H1 (cell line): ENCODE measurements at regions of chr1 and their contacts with region 1.

Region 1: GRCh38 chr1:226308723-226309315 is at the start of gene LIN9:
- DNase-seq: peak; percentile 77 to 98
- H3K4me3 ChIP-seq: peak within 1 kb of the TSS; percentile 96 to 100 (median 96)
- H3K27ac ChIP-seq: peak within 1 kb of the TSS; percentile 99
- H3K4me1 ChIP-seq: peaks cover 0 to 12% (median 11%) of the 10 kb centered on the region in 4 experiments; a peak in 6 of 7 replicates
- H3K27me3 ChIP-seq: peaks cover 0 to 12% (median 9%) of the 10 kb centered on the region in 4 experiments; a peak in 5 of 7 replicates
- CTCF ChIP-seq: no peak
- EP300 ChIP-seq: peak in 1 of 2 experiments; percentile 3; a peak in 1 of 3 replicates
- POLR2A ChIP-seq: peak; percentile 88
- RAD21 ChIP-seq: no peak
- total RNA-seq, gene LIN9: 12.4 and 12.6 TPM in 2 replicates

Region 2: GRCh38 chr1:226233293-226233692 is 75.5 kb before region 1 on chr1:
- CTCF ChIA-PET with region 1: no interaction called
- POLR2A ChIA-PET with region 1: no interaction called
- DNase-seq: no peak
- H3K4me3 ChIP-seq: no peak overlapping the region
- H3K27ac ChIP-seq: no peak overlapping the region
- H3K4me1 ChIP-seq: no peaks in the 10 kb centered on the region
- H3K27me3 ChIP-seq: no peaks in the 10 kb centered on the region
- CTCF ChIP-seq: no peak
- EP300 ChIP-seq: no peak
- POLR2A ChIP-seq: no peak
- RAD21 ChIP-seq: no peak

Region 3: GRCh38 chr1:226325178-226325577 is 16.4 kb after region 1 on chr1:
- CTCF ChIA-PET with region 1: interaction called, 9 read pairs
- POLR2A ChIA-PET with region 1: interaction called, 11 read pairs
- DNase-seq: no peak
- H3K4me3 ChIP-seq: no peak overlapping the region
- H3K27ac ChIP-seq: no peak overlapping the region
- H3K4me1 ChIP-seq: no peaks in the 10 kb centered on the region
- H3K27me3 ChIP-seq: no peaks in the 10 kb centered on the region; a peak in 1 of 7 replicates
- CTCF ChIP-seq: no peak
- EP300 ChIP-seq: no peak
- POLR2A ChIP-seq: no peak
- RAD21 ChIP-seq: no peak

Region 4: DNA sequence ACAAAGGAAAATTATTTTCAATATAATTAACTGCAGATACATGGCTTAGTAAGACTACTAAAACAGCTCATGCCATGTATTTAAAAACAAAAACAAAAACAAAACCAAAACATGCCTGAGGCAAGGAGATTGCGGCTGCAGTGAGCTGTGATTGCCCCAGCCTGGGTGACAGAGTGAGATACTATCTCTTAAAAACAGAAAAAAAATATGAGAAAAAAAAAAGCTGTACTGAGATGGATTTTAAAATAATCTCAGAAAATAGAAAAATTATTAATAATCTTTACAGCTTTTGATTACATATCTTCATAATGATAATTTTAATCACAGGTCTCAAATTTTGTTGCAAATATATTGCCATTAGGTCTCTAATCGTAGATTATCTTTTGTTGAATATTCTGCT is 24.1 kb after region 1 on chr1:
- CTCF ChIA-PET with region 1: interaction called, 20 read pairs
- POLR2A ChIA-PET with region 1: interaction called, 11 read pairs
- DNase-seq: no peak
- H3K4me3 ChIP-seq: peak overlapping the region in 1 of 4 experiments; percentile 34; a peak in 1 of 8 replicates
- H3K27ac ChIP-seq: no peak overlapping the region
- H3K4me1 ChIP-seq: peaks cover 0 to 3% (median 0%) of the 10 kb centered on the region in 4 experiments; a peak in 1 of 7 replicates
- H3K27me3 ChIP-seq: no peaks in the 10 kb centered on the region
- CTCF ChIP-seq: no peak
- EP300 ChIP-seq: no peak
- POLR2A ChIP-seq: no peak
- RAD21 ChIP-seq: no peak

Region 5: GRCh38 chr1:226351709-226352108 is 42.9 kb after region 1 on chr1:
- CTCF ChIA-PET with region 1: interaction called, 3 read pairs
- POLR2A ChIA-PET with region 1: interaction called, 11 read pairs
- DNase-seq: no peak
- H3K4me3 ChIP-seq: no peak overlapping the region
- H3K27ac ChIP-seq: no peak overlapping the region
- H3K4me1 ChIP-seq: no peaks in the 10 kb centered on the region
- H3K27me3 ChIP-seq: no peaks in the 10 kb centered on the region
- CTCF ChIP-seq: no peak
- EP300 ChIP-seq: no peak
- POLR2A ChIP-seq: no peak
- RAD21 ChIP-seq: no peak

Region 6: GRCh38 chr1:226390326-226391080 is 81.7 kb after region 1 on chr1:
- CTCF ChIA-PET with region 1: no interaction called
- POLR2A ChIA-PET with region 1: no interaction called
- DNase-seq: no peak
- H3K4me3 ChIP-seq: no peak overlapping the region
- H3K27ac ChIP-seq: no peak overlapping the region
- H3K4me1 ChIP-seq: no peaks in the 10 kb centered on the region
- H3K27me3 ChIP-seq: no peaks in the 10 kb centered on the region
- CTCF ChIP-seq: no peak
- EP300 ChIP-seq: no peak
- POLR2A ChIP-seq: no peak
- RAD21 ChIP-seq: no peak

Region 7: DNA sequence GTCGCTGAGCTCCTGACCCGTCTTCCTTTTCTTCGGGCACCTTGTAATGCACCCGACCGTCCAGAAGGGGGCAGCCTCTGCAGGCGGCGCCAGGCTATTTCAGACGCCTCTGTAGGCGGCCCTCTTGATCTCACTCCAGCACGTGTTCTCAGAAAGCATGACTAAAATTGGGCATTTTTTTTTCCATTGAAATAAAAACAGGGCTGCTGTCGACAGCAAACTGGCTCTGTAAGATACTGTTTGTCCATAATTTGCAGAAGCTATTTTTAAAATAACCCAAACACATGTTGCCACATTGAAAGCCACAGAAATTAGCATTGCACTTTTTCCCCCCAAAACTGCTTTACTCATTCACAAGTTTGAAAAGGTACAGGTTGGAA is 317.7 kb after region 1 on chr1:
- CTCF ChIA-PET with region 1: no interaction called
- POLR2A ChIA-PET with region 1: no interaction called
- DNase-seq: peak; percentile 56 to 91
- H3K4me3 ChIP-seq: no peak overlapping the region
- H3K27ac ChIP-seq: no peak overlapping the region
- H3K4me1 ChIP-seq: no peaks in the 10 kb centered on the region
- H3K27me3 ChIP-seq: peaks cover 0 to 10% (median 10%) of the 10 kb centered on the region in 4 experiments; a peak in 6 of 7 replicates
- CTCF ChIP-seq: peak; percentile 86 to 94 (median 88)
- EP300 ChIP-seq: no peak
- POLR2A ChIP-seq: no peak
- RAD21 ChIP-seq: peak; percentile 81 to 85